Ascending aorta (tissue), 2 donors: ENCODE measurements at regions of chr14 and their contacts with region 1.

Region 1: GRCh38 chr14:92106143-92106926 is at the start of gene ATXN3:
- DNase-seq: peak; percentile 90 to 98
- H3K4me3 ChIP-seq: peak within 1 kb of the TSS; percentile 89 to 90
- H3K27ac ChIP-seq: peak within 1 kb of the TSS; percentile 93
- H3K4me1 ChIP-seq: peaks cover 4 to 15% of the 10 kb centered on the region in 2 donors
- H3K27me3 ChIP-seq: no peaks in the 10 kb centered on the region
- CTCF ChIP-seq: peak; percentile 62 to 83 (median 79)
- total RNA-seq, gene ATXN3: 90.4 TPM

Region 2: GRCh38 chr14:91836119-91836881 is 270.0 kb before region 1 on chr14:
- intact Hi-C with region 1: loop called (anchors 5 kb)
- DNase-seq: peak; percentile 39 to 92
- H3K4me3 ChIP-seq: peak overlapping the region; percentile 75 to 80
- H3K27ac ChIP-seq: peak overlapping the region; percentile 91 to 93
- H3K4me1 ChIP-seq: peaks cover 0 to 9% of the 10 kb centered on the region in 2 donors
- H3K27me3 ChIP-seq: no peaks in the 10 kb centered on the region
- CTCF ChIP-seq: no peak

Region 3: GRCh38 chr14:91925001-91925726 is 181.2 kb before region 1 on chr14:
- intact Hi-C with region 1: loop called (anchors 10 kb)
- DNase-seq: no peak
- H3K4me3 ChIP-seq: peak overlapping the region in 1 of 2 donors; percentile 32
- H3K27ac ChIP-seq: peak overlapping the region; percentile 89 to 91
- H3K4me1 ChIP-seq: peaks cover 43 to 93% of the 10 kb centered on the region in 2 donors
- H3K27me3 ChIP-seq: no peaks in the 10 kb centered on the region
- CTCF ChIP-seq: no peak

Region 4: DNA sequence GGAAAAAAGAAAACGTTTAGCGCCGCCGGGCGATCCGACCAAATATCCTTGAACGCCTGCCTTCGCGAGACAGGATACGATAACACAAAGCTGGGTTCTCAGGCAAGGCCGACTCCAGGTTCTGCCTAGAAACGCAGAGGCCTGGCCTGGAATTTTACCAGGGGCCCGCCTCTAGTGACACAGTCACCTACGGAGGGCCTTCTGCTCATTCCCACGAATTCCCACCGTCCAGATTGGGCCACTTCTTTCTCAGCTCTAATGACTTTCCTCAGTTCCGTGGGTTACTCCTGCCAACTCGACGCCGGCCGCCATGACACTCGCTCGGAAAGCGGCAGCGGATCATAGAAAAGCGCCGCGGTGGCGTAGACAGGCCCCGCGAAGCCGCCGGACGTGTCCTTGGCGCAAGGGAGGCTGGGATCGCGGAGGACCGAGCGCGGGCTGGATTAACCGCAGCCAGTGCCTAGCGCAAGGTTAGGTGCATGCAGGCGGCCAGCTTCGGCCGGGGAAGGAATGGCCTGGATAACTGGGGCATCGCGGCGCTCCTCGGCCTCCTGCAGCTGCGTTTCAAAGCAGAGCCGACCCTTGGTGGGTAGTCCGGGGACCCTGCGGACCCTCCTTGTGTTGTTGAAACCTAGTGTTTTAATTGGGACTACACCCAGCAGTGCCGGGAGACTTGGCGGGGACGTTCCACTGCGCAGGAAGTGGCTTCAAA is 66.5 kb before region 1 on chr14 and contains the start of gene TRIP11:
- intact Hi-C with region 1: loop called (anchors 2 kb)
- DNase-seq: peak; percentile 76 to 95
- H3K4me3 ChIP-seq: peak within 1 kb of the TSS; percentile 75 to 92
- H3K27ac ChIP-seq: peak within 1 kb of the TSS; percentile 95 to 99
- H3K4me1 ChIP-seq: peaks cover 3 to 37% of the 10 kb centered on the region in 2 donors
- H3K27me3 ChIP-seq: no peaks in the 10 kb centered on the region
- CTCF ChIP-seq: no peak
- total RNA-seq, gene TRIP11: 8.8 TPM

Region 5: GRCh38 chr14:92093320-92093719 is 13.0 kb before region 1 on chr14:
- intact Hi-C with region 1: no loop called
- DNase-seq: no peak
- H3K4me3 ChIP-seq: no peak overlapping the region
- H3K27ac ChIP-seq: no peak overlapping the region
- H3K4me1 ChIP-seq: no peaks in the 10 kb centered on the region
- H3K27me3 ChIP-seq: no peaks in the 10 kb centered on the region
- CTCF ChIP-seq: peak in 1 of 3 experiments; percentile 9

Region 6: DNA sequence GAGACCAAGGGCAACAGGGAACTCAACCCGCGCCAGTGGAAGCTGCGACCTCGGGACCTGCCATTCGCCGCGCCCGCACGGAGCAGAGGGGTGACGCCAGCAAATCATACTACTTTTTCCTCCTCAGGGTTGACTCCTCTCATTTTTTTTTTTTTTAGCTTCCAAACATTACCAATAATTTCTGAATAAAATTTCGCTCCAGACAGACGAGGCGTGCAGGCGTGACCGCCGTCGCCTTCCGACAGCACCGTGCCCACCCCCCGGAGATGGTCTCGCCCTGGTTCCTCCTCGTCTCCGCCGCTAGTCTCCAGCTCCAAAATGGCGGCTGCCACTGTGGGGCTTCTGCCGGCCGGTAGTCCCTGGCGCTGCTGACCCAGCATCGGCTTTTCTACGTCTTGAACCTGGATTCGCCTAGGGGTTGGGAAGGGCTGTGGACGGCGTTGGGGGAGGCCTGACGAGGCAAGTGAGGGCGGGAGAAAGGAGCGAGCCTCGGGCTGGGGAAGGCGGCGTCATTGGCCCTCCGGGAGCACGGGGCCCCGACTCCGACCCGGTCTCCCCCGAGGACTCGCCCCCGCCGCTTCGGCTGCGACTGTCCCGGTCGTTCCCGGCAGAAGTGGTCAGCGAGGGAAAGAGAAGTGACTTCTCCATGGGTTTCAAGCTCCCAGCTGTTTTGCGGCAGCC is 15.5 kb after region 1 on chr14 and contains the starts of genes CPSF2 and NDUFB1:
- intact Hi-C with region 1: loop called (anchors 1 kb)
- DNase-seq: peak in 1 of 2 donors; percentile 86
- H3K4me3 ChIP-seq: peak within 1 kb of the TSS; percentile 77 to 90
- H3K27ac ChIP-seq: peak within 1 kb of the TSS; percentile 89 to 94
- H3K4me1 ChIP-seq: peaks cover 0 to 12% of the 10 kb centered on the region in 2 donors
- H3K27me3 ChIP-seq: no peaks in the 10 kb centered on the region
- CTCF ChIP-seq: peak in 1 of 3 experiments; percentile 26
- total RNA-seq, gene CPSF2: 8.0 TPM
- total RNA-seq, gene NDUFB1: 867 TPM

Region 7: DNA sequence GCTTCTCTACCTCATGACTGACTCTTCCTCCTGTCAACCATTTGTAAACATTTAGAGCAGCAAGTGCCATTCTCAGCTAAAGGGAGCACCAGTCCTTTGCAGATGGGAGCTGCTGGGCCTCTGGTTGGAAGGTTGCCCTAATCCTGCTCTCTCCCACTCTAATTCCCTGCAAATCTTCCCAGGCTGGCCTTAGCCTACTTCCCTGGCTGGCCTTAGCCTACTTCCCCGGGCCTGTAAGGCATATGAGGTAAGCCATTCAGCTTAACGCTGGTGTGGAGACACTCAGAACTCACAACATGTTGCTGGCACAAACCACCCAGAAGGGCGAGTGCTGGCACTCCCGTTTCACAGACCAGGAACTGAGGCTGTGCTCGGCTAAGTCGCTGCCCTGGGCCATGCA is 84.4 kb after region 1 on chr14:
- intact Hi-C with region 1: no loop called
- DNase-seq: no peak
- H3K4me3 ChIP-seq: no peak overlapping the region
- H3K27ac ChIP-seq: no peak overlapping the region
- H3K4me1 ChIP-seq: no peaks in the 10 kb centered on the region
- H3K27me3 ChIP-seq: no peaks in the 10 kb centered on the region
- CTCF ChIP-seq: no peak